Activated CD4-positive, alpha-beta memory T cell treated with anti-CD3 and anti-CD28 coated beads for 36 hours (primary cell): ENCODE measurements at regions of chr5 and their contacts with region 1.

Region 1: GRCh38 chr5:180575571-180575970 is 15.7 kb downstream of the SCGB3A1 start:
- DNase-seq: no peak
- H3K4me3 Mint-ChIP-seq: no peak overlapping the region
- H3K27ac Mint-ChIP-seq: peak overlapping the region; percentile 25
- H3K4me1 Mint-ChIP-seq: peaks cover 13% of the 10 kb centered on the region
- H3K27me3 Mint-ChIP-seq: no peaks in the 10 kb centered on the region

Region 2: GRCh38 chr5:179791881-179792611 is 783.5 kb before region 1 on chr5:
- CTCF ChIA-PET with region 1: no interaction called
- POLR2A ChIA-PET with region 1: no interaction called
- intact Hi-C with region 1: no loop called
- DNase-seq: no peak
- H3K4me3 Mint-ChIP-seq: no peak overlapping the region
- H3K27ac Mint-ChIP-seq: no peak overlapping the region
- H3K4me1 Mint-ChIP-seq: peaks cover 25% of the 10 kb centered on the region
- H3K27me3 Mint-ChIP-seq: no peaks in the 10 kb centered on the region

Region 3: GRCh38 chr5:180494060-180494509 is 81.5 kb before region 1 on chr5 and contains the start of gene CNOT6:
- CTCF ChIA-PET with region 1: no interaction called
- POLR2A ChIA-PET with region 1: no interaction called
- intact Hi-C with region 1: loop called (anchors 5 kb)
- DNase-seq: peak; percentile 95
- H3K4me3 Mint-ChIP-seq: peak within 1 kb of the TSS; percentile 84
- H3K27ac Mint-ChIP-seq: peak within 1 kb of the TSS; percentile 82
- H3K4me1 Mint-ChIP-seq: peaks cover 32% of the 10 kb centered on the region
- H3K27me3 Mint-ChIP-seq: no peaks in the 10 kb centered on the region
- total RNA-seq, gene CNOT6: 32.0 to 35.2 TPM

Region 4: DNA sequence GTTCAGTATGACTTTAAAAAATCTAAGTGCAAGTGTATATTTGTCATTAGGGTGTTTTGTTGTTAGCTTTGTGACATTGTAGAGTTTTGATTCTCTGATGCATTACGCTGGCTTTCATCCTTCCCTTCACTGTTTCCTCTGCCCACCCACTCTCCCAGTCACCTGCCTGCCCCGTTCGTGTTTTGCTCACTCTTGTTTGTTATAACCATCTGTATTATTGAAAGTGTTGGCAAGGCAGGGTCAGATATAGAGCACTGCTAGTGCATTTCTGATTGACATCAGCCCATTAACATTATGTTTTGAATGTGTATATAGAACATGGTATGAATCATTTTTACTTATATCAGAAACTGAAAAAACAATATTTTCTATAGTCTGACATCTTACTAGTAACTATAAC is 11.6 kb before region 1 on chr5:
- CTCF ChIA-PET with region 1: no interaction called
- POLR2A ChIA-PET with region 1: interaction called, 7 read pairs
- intact Hi-C with region 1: loop called (anchors 1 kb)
- DNase-seq: peak; percentile 61
- H3K4me3 Mint-ChIP-seq: no peak overlapping the region
- H3K27ac Mint-ChIP-seq: no peak overlapping the region
- H3K4me1 Mint-ChIP-seq: peaks cover 35% of the 10 kb centered on the region
- H3K27me3 Mint-ChIP-seq: no peaks in the 10 kb centered on the region